ENCODE measurements at regions of chr22 and their contacts with region 1.

Region 1: GRCh38 chr22:34414484-34415440 is 494.5 kb upstream of the LARGE1 start:
- DNase-seq: peak; percentile 37 to 60
- ATAC-seq: peak; percentile 98

Region 2: GRCh38 chr22:35023692-35024363 is 609.1 kb after region 1 on chr22:
- intact Hi-C with region 1: loop called in 1 of 2 experiments (anchors 10 kb)
- DNase-seq: peak; percentile 51 to 89
- ATAC-seq: peak; percentile 64